SK-N-SH (cell line): ENCODE measurements at regions of chr6 and their contacts with region 1.

Region 1: GRCh38 chr6:31952140-31952805 is 6.4 kb downstream of the CFB start:
- DNase-seq: peak; percentile 75
- H3K4me3 ChIP-seq: no peak overlapping the region
- H3K27ac ChIP-seq: peak overlapping the region; percentile 6 to 26; a peak in 3 of 4 replicates
- H3K4me1 ChIP-seq: no peaks in the 10 kb centered on the region; a peak in 1 of 4 replicates
- H3K27me3 ChIP-seq: no peaks in the 10 kb centered on the region
- CTCF ChIP-seq: peak; percentile 90
- EP300 ChIP-seq: no peak
- RAD21 ChIP-seq: peak; percentile 67

Region 2: DNA sequence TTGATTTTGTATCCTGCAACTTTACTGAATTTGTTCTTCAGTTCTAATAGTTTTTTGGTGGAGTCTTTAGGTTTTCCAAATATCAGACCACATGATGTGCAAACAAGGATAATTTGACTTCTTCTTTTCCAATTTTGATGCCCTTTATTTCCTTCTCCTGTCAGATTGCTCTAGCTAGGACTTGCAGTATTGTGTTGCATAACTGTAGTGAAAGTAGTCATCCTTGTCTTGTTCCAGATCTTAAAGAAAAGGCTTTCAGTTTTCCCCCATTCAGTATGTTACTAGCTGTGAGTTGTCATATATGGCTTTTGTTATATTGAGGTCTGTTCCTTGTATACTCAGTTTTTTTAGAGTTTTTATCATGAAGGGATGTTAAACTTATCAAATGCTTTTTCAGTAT is 449.7 kb before region 1 on chr6:
- CTCF ChIA-PET with region 1: no interaction called
- POLR2A ChIA-PET with region 1: no interaction called
- DNase-seq: no peak
- H3K4me3 ChIP-seq: no peak overlapping the region
- H3K27ac ChIP-seq: no peak overlapping the region
- H3K4me1 ChIP-seq: peaks cover 0 to 2% of the 10 kb centered on the region in 2 experiments; a peak in 1 of 4 replicates
- H3K27me3 ChIP-seq: no peaks in the 10 kb centered on the region
- CTCF ChIP-seq: no peak
- EP300 ChIP-seq: no peak
- RAD21 ChIP-seq: no peak

Region 3: GRCh38 chr6:31680840-31681671 is 271.2 kb before region 1 on chr6 and contains the start of gene LY6G5C:
- CTCF ChIA-PET with region 1: interaction called, 14 read pairs
- POLR2A ChIA-PET with region 1: no interaction called
- DNase-seq: peak; percentile 88
- H3K4me3 ChIP-seq: peak within 1 kb of the TSS in 1 of 2 experiments; percentile 31; a peak in 1 of 4 replicates
- H3K27ac ChIP-seq: peak within 1 kb of the TSS in 1 of 2 experiments; percentile 31; a peak in 1 of 4 replicates
- H3K4me1 ChIP-seq: peaks cover 3 to 7% of the 10 kb centered on the region in 2 experiments; a peak in 2 of 4 replicates
- H3K27me3 ChIP-seq: no peaks in the 10 kb centered on the region
- CTCF ChIP-seq: peak; percentile 69
- EP300 ChIP-seq: no peak
- RAD21 ChIP-seq: peak; percentile 96
- polyA plus RNA-seq, gene LY6G5C: 0.60 and 1.1 TPM in 2 replicates

Region 4: DNA sequence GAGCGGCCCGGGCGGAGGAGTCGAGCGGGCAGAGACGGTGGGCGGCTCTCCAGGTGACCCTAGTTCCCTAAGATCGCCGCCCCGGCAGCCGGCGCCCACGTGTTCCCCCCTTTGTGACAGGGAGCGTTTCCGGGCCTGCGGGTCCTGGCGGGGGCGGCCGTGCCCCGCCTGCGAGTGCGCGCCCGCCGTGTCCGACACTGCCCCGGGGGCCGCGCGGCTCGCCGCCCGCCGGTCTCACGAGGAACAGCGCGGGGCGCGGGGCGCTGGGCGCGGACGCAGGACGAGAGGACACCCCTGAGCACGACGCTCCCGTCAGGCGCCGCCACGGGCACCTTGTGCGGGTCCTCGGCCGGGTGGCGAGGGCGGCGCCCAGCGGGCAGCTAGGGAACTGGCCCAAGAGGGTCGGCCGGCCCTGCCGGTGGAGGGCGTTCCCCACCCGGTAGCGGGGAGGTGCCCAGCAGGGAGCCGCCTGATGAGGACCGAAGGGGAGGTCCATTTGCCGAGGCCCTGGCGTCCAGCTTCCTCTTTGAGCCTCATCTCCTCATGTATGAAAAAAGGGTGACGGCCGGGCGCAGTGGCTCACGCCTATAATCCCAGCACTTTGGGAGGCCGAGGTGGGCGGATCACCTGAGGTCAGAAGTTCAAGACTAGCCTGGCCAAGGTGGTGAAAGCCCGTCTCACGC is 156.5 kb before region 1 on chr6 and contains the start of gene VARS1:
- CTCF ChIA-PET with region 1: no interaction called
- POLR2A ChIA-PET with region 1: no interaction called
- DNase-seq: peak; percentile 98
- H3K4me3 ChIP-seq: peak within 1 kb of the TSS; percentile 80 to 82
- H3K27ac ChIP-seq: peak within 1 kb of the TSS; percentile 72 to 96
- H3K4me1 ChIP-seq: peaks cover 3 to 12% of the 10 kb centered on the region in 2 experiments; a peak in 3 of 4 replicates
- H3K27me3 ChIP-seq: no peaks in the 10 kb centered on the region
- CTCF ChIP-seq: peak; percentile 66
- EP300 ChIP-seq: no peak
- RAD21 ChIP-seq: peak; percentile 53
- polyA plus RNA-seq, gene VARS1: 22.2 and 35.1 TPM in 2 replicates

Region 5: DNA sequence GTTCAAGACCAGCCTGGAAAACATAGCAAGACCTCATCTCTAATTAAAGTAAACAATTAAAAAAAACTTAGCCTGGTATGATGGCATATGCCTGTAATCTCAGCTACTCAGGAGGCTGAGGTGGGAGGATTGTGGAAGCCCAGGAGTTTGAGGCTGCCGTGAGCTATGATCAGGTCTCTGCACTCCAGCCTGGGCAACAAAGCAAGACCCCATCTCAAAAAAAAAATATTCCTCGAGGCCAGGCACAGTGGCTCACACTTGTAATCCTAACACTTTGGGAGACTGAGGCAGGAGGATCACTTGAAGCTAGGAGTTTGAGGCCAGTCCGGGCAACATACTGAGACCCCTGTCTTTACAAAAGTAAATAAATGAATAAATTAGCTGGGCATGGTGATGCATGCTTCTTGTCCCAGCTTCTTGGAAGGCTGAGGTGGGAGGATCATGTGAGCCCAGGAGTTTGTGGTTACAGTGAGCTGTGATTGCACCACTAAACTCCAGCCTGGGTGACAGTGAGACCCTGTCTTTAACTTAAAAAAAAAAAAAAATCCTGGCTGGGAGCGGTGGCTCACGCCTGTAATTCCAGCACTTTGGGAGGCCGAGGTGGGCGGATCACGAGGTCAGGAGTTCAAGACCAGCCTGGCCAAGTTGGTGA is 34.1 kb before region 1 on chr6:
- CTCF ChIA-PET with region 1: interaction called, 11 read pairs
- POLR2A ChIA-PET with region 1: no interaction called
- DNase-seq: no peak
- H3K4me3 ChIP-seq: no peak overlapping the region
- H3K27ac ChIP-seq: no peak overlapping the region
- H3K4me1 ChIP-seq: no peaks in the 10 kb centered on the region
- H3K27me3 ChIP-seq: no peaks in the 10 kb centered on the region
- CTCF ChIP-seq: no peak
- EP300 ChIP-seq: no peak
- RAD21 ChIP-seq: no peak

Region 6: DNA sequence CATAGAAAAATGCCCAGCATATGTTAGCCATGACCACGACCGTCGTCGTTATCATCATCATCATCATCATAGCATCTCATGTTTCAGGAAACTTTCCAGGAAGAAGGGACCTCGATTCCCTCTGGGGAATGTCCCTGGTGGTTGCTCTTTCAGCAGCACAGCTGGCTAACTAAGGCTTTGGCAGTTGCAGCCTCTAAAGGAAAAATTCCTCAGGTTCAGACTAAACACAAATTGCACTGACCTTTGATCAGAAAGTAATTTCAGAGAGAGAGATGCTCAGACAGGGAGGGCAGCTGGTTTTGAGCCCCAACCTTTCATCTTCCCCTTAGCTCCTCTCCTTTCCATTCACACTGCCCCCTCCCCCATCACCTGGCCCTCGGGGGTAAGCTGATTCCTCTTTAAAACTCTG is 12.0 kb before region 1 on chr6:
- CTCF ChIA-PET with region 1: interaction called, 16 read pairs
- POLR2A ChIA-PET with region 1: interaction called, 7 read pairs
- DNase-seq: no peak
- H3K4me3 ChIP-seq: no peak overlapping the region
- H3K27ac ChIP-seq: no peak overlapping the region
- H3K4me1 ChIP-seq: peaks cover 0 to 7% of the 10 kb centered on the region in 2 experiments; a peak in 1 of 4 replicates
- H3K27me3 ChIP-seq: no peaks in the 10 kb centered on the region
- CTCF ChIP-seq: no peak
- EP300 ChIP-seq: no peak
- RAD21 ChIP-seq: no peak

Region 7: DNA sequence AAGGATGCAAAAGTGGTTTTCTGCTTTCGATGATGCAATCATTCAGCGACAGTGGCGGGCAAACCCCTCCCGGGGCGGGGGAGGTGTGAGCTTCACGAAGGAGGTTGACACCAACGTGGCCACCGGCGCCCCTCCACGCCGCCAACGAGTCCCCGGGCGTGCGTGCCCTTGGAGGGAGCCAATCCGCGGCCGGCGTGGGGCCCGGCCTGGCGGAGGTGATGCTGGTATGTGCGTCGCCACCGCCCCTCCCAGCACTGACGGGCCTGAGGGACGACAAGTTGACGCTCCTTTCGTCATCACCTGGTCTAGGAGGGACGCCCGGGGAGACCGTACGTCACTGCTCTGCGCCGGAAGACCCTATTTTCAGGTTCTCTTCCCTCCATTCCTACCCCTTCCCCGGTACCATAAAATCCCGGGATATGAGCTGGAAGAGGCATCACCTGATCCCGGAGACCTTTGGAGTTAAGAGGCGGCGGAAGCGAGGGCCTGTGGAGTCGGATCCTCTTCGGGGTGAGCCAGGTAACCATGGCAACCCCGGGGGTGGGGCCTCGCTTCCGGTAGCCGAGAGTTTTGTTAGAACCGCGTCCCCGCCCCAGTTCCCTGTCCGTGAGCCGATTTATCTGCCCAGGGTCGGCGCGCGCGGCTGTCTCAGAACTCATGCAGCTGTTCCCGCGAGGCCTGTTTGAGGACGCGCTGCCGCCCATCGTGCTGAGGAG is 19.9 kb after region 1 on chr6 and contains the start of gene DXO:
- CTCF ChIA-PET with region 1: interaction called, 29 read pairs
- POLR2A ChIA-PET with region 1: interaction called, 6 read pairs
- DNase-seq: peak; percentile 98
- H3K4me3 ChIP-seq: peak within 1 kb of the TSS; percentile 91 to 94
- H3K27ac ChIP-seq: peak within 1 kb of the TSS; percentile 95 to 97
- H3K4me1 ChIP-seq: peaks cover 5 to 26% of the 10 kb centered on the region in 2 experiments; a peak in 3 of 4 replicates
- H3K27me3 ChIP-seq: no peaks in the 10 kb centered on the region
- CTCF ChIP-seq: no peak
- EP300 ChIP-seq: no peak
- RAD21 ChIP-seq: no peak
- polyA plus RNA-seq, gene DXO: 25.3 and 27.1 TPM in 2 replicates

Region 8: DNA sequence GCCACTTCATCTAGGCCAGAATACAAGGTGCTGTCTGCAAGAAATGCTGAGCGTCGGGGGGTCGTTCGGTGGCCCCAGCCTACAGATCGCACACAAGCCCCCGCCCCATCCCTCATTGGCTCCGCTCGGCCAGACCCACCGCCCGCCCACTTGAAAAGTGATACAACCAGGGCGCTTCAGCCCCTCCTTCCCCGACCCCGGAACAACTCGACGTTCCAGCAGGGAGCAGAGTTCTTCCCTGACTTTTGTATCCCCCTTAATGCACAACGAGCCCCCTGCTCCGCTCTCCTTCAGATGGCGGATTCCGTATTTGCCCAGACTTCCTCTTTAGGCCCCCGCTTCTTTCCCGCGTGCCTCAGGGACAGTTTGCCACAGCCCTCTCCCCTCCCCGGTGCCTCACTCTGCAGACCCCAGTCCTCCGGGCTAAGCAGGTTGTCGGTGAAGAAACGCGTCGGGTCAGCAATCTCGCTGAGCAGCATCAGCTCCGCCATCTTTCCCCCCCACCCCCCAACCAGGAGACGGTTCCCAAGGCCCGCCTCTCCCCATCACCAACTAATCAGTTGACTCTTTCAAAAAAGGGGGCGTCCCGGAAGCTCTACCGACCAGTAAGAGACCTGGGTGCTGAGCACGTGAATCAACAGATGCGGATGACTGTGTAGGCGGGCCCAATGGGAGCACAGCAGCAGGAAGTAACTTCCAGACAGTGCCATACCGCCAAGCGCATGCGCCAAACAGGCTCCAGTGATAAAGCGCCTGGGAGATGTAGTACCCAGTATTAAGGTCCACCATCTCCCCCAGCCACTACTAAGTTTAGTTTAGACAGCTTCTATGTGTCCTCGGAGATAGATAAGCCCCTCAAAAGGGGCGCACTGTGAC is 175.7 kb after region 1 on chr6 and contains the start of gene ATF6B:
- CTCF ChIA-PET with region 1: no interaction called
- POLR2A ChIA-PET with region 1: no interaction called
- DNase-seq: peak; percentile 92
- H3K4me3 ChIP-seq: peak within 1 kb of the TSS; percentile 75 to 97
- H3K27ac ChIP-seq: peak within 1 kb of the TSS; percentile 90 to 95
- H3K4me1 ChIP-seq: peaks cover 18 to 22% of the 10 kb centered on the region in 2 experiments; a peak in 3 of 4 replicates
- H3K27me3 ChIP-seq: no peaks in the 10 kb centered on the region
- CTCF ChIP-seq: no peak
- EP300 ChIP-seq: no peak
- RAD21 ChIP-seq: no peak
- polyA plus RNA-seq, gene ATF6B: 61.3 and 73.0 TPM in 2 replicates